Activated naive CD4-positive, alpha-beta T cell treated with anti-CD3 and anti-CD28 coated beads for 36 hours (primary cell): ENCODE measurements at regions of chr10 and their contacts with region 1.

Region 1: DNA sequence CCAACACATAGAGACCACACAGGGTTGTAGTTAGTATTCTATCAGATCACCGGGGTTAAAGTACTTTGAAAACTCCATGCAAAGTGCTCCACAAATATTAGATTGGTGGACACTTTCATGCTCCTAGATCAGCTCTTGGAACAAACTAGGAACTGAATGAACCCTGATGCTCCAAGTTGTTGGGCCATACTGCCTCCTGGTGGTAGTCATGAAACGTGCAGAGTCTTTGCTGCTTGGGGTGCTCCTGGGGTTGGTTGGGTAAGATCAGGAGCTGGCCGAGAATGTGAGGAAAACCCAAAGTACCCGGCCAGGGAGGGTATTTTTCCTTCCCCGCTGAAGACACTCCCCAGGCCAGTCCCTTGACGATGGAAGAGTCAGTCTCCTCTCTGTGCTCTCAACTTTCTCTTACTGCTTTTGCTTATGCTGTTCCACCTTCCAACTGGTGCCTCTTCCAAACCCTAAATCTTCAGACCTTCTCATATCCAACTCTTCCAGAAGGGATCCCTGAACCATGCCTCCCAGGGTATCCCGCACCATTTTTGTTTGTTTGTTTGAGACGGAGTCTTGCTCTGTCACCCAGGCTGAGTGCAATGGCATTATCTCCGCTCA is 920 bp upstream of the RPEL1 start:
- DNase-seq: peak; percentile 83
- H3K4me3 Mint-ChIP-seq: no peak overlapping the region
- H3K27ac Mint-ChIP-seq: no peak overlapping the region
- H3K4me1 Mint-ChIP-seq: peaks cover 17% of the 10 kb centered on the region
- H3K27me3 Mint-ChIP-seq: no peaks in the 10 kb centered on the region

Region 2: GRCh38 chr10:103069453-103070331 is 175.1 kb before region 1 on chr10:
- CTCF ChIA-PET with region 1: interaction called, 3 read pairs
- intact Hi-C with region 1: loop called (anchors 1 kb)
- DNase-seq: peak; percentile 83
- H3K4me3 Mint-ChIP-seq: no peak overlapping the region
- H3K27ac Mint-ChIP-seq: no peak overlapping the region
- H3K4me1 Mint-ChIP-seq: peaks cover 17% of the 10 kb centered on the region
- H3K27me3 Mint-ChIP-seq: no peaks in the 10 kb centered on the region

Region 3: GRCh38 chr10:103139803-103140202 is 105.0 kb before region 1 on chr10:
- CTCF ChIA-PET with region 1: interaction called, 3 read pairs
- intact Hi-C with region 1: loop called (anchors 1 kb)
- DNase-seq: peak; percentile 10
- H3K4me3 Mint-ChIP-seq: no peak overlapping the region
- H3K27ac Mint-ChIP-seq: no peak overlapping the region
- H3K4me1 Mint-ChIP-seq: peaks cover 23% of the 10 kb centered on the region
- H3K27me3 Mint-ChIP-seq: no peaks in the 10 kb centered on the region

Region 4: GRCh38 chr10:103192451-103193106 is 52.2 kb before region 1 on chr10:
- CTCF ChIA-PET with region 1: interaction called, 12 read pairs
- intact Hi-C with region 1: loop called (anchors 1 kb)
- DNase-seq: peak; percentile 78
- H3K4me3 Mint-ChIP-seq: peak overlapping the region; percentile 87
- H3K27ac Mint-ChIP-seq: peak overlapping the region; percentile 96
- H3K4me1 Mint-ChIP-seq: peaks cover 39% of the 10 kb centered on the region
- H3K27me3 Mint-ChIP-seq: no peaks in the 10 kb centered on the region

Region 5: GRCh38 chr10:103481974-103482531 is 237.3 kb after region 1 on chr10:
- CTCF ChIA-PET with region 1: no interaction called
- intact Hi-C with region 1: loop called (anchors 10 kb)
- DNase-seq: peak; percentile 41
- H3K4me3 Mint-ChIP-seq: no peak overlapping the region
- H3K27ac Mint-ChIP-seq: no peak overlapping the region
- H3K4me1 Mint-ChIP-seq: no peaks in the 10 kb centered on the region
- H3K27me3 Mint-ChIP-seq: no peaks in the 10 kb centered on the region